Activated naive CD4-positive, alpha-beta T cell treated with anti-CD3 and anti-CD28 coated beads for 36 hours (primary cell): ENCODE measurements at regions of chr14 and their contacts with region 1.

Region 1: DNA sequence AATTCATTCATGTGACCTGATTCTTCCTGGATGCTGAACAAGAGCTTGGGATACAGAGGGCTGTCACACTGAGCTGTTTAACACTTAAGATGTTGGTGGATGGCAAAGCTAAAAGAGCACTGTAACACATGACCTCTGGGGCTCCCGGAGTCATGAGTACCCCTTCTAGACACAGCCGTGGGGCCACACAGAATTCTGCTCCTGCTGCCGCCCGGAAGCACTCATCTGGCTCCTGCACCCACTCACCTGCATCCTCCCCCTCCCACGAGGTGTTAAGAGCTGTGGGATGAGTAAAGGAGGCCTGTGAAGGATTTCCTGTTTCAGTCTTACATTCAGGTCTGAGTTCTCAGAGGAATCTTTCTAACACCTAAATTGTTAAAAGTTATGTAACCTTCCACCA is 78.0 kb upstream of the SSTR1 start:
- DNase-seq: peak; percentile 73
- H3K4me3 Mint-ChIP-seq: no peak overlapping the region
- H3K27ac Mint-ChIP-seq: peak overlapping the region; percentile 77
- H3K4me1 Mint-ChIP-seq: peaks cover 35% of the 10 kb centered on the region
- H3K27me3 Mint-ChIP-seq: no peaks in the 10 kb centered on the region

Region 2: DNA sequence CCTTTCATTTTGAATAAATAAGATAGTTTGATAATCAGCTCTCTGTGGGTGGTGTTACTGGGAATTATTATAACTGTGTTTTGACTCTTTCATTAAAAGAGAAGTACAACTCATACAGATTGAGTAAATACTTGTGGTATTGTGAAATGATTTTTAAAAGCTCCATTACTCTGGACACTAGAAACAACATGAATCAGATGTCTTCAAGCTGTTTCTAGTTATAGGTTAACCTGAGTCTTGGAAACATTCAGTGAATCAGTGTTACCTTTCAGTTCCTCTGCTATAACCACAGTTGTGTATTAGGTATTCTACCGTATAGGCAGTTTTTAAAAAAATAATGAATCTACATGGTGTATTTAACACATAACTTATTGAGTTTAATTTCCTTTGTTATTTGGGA is 50.4 kb before region 1 on chr14:
- CTCF ChIA-PET with region 1: interaction called, 3 read pairs
- intact Hi-C with region 1: loop called (anchors 2 kb)
- DNase-seq: no peak
- H3K4me3 Mint-ChIP-seq: peak overlapping the region; percentile 9
- H3K27ac Mint-ChIP-seq: no peak overlapping the region
- H3K4me1 Mint-ChIP-seq: peaks cover 55% of the 10 kb centered on the region
- H3K27me3 Mint-ChIP-seq: no peaks in the 10 kb centered on the region